ENCODE measurements at regions of chr3 and their contacts with region 1.

Region 1: DNA sequence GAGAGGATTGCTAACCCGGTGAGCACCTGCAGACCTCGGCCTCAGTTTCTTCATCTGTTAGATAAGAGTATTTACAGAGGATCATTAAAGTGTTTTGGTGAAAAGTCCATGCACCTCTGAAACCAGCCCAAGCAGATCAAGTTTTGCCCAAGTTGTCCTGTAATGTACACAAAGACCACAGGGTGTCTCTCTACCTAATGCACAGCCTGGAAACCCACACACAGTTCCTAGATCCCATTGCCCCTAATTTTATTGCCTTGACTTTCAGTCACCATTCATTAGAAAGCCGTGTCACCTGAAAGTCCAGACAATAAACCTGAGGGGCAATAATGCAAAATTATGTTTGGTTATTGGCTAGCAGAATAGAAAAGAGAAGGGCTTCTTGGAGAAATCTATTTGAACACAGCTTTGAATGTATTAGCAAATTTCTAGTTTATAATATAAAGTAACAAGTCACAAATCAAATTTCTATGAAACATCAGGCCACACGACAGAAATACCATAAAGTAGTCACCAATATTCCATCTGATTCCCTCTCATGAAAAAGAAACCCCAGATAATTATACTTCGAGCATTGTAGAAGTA is 161.3 kb upstream of the SLC2A2 start:
- DNase-seq: no peak
- H3K4me3 ChIP-seq: no peak overlapping the region
- H3K27ac ChIP-seq: no peak overlapping the region
- H3K4me1 ChIP-seq: peaks cover 0 to 7% (median 3%) of the 10 kb centered on the region in 4 experiments; a peak in 4 of 7 replicates
- H3K27me3 ChIP-seq: no peaks in the 10 kb centered on the region
- CTCF ChIP-seq: peak in 2 of 3 experiments; percentile 61 to 62; a peak in 3 of 4 replicates
- EP300 ChIP-seq: no peak
- POLR2A ChIP-seq: no peak
- RAD21 ChIP-seq: peak; percentile 64 to 75

Region 2: GRCh38 chr3:171172070-171172469 is 15.7 kb before region 1 on chr3:
- CTCF ChIA-PET with region 1: interaction called, 15 read pairs
- POLR2A ChIA-PET with region 1: no interaction called
- DNase-seq: peak in 1 of 2 experiments; percentile 66
- H3K4me3 ChIP-seq: no peak overlapping the region
- H3K27ac ChIP-seq: no peak overlapping the region
- H3K4me1 ChIP-seq: peaks cover 0 to 5% (median 2%) of the 10 kb centered on the region in 4 experiments; a peak in 1 of 7 replicates
- H3K27me3 ChIP-seq: no peaks in the 10 kb centered on the region
- CTCF ChIP-seq: peak in 2 of 3 experiments; percentile 42 to 58; a peak in 3 of 4 replicates
- EP300 ChIP-seq: no peak
- POLR2A ChIP-seq: no peak
- RAD21 ChIP-seq: peak; percentile 11 to 40; a peak in 3 of 4 replicates

Region 3: GRCh38 chr3:171206283-171206682 is 18.5 kb after region 1 on chr3:
- CTCF ChIA-PET with region 1: interaction called, 23 read pairs
- POLR2A ChIA-PET with region 1: no interaction called
- DNase-seq: no peak
- H3K4me3 ChIP-seq: no peak overlapping the region
- H3K27ac ChIP-seq: no peak overlapping the region
- H3K4me1 ChIP-seq: peaks cover 0 to 6% (median under 1%) of the 10 kb centered on the region in 4 experiments; a peak in 2 of 7 replicates
- H3K27me3 ChIP-seq: no peaks in the 10 kb centered on the region; a peak in 1 of 7 replicates
- CTCF ChIP-seq: no peak
- EP300 ChIP-seq: no peak
- POLR2A ChIP-seq: no peak
- RAD21 ChIP-seq: no peak

Region 4: DNA sequence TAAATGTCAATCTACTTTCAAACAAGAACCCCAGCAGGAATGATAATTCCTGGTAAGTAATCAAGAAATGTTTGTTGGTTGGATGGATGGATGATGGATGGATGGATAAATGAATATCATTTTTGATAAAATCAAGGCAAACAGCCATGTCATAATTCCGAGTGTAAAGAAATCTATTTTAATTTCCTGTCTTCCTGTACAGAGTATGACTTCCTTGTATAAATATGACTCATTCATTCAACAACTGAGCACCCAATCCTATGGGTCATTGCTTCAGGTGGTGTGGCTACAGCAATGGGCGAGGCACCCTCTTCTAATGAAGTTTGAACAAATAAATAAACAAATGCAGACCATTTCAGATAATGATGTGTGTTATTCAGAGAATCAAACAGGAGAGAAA is 73.6 kb after region 1 on chr3:
- CTCF ChIA-PET with region 1: no interaction called
- POLR2A ChIA-PET with region 1: no interaction called
- DNase-seq: no peak
- H3K4me3 ChIP-seq: no peak overlapping the region
- H3K27ac ChIP-seq: no peak overlapping the region
- H3K4me1 ChIP-seq: peaks cover 2 to 6% (median 4%) of the 10 kb centered on the region in 4 experiments; a peak in 5 of 7 replicates
- H3K27me3 ChIP-seq: no peaks in the 10 kb centered on the region
- CTCF ChIP-seq: no peak
- EP300 ChIP-seq: no peak
- POLR2A ChIP-seq: no peak
- RAD21 ChIP-seq: no peak

Region 5: GRCh38 chr3:171566803-171567422 is 379.1 kb after region 1 on chr3:
- CTCF ChIA-PET with region 1: interaction called, 22 read pairs
- POLR2A ChIA-PET with region 1: no interaction called
- DNase-seq: no peak
- H3K4me3 ChIP-seq: no peak overlapping the region
- H3K27ac ChIP-seq: no peak overlapping the region
- H3K4me1 ChIP-seq: no peaks in the 10 kb centered on the region
- H3K27me3 ChIP-seq: peaks cover 0 to 1% (median 0%) of the 10 kb centered on the region in 4 experiments; a peak in 1 of 7 replicates
- CTCF ChIP-seq: peak in 2 of 3 experiments; percentile 60 to 71; a peak in 2 of 4 replicates
- EP300 ChIP-seq: no peak
- POLR2A ChIP-seq: no peak
- RAD21 ChIP-seq: peak; percentile 91 to 92